GM13976 (cell line): ENCODE measurements at regions of chr3 and their contacts with region 1.

Region 1: DNA sequence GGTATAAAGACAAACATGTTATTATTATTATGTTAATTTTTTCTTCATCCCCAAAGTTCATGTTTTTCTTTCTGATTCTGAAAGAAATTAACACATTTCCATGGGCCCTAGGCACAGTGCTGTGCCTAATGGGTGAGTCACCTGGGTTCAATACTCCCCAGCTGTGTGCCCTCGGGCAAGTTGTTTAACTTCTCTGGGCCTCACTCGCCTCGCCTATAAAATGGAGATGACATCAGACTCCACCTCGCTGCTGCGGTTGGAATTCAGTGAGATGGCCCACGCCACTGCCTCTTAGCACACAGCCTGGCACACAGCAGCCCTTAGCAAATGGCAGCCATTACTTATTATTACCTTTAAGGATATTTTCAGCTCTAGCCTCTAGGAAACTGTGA is 22.6 kb downstream of the DNASE1L3 start:
- DNase-seq: no peak
- CTCF ChIP-seq: no peak

Region 2: DNA sequence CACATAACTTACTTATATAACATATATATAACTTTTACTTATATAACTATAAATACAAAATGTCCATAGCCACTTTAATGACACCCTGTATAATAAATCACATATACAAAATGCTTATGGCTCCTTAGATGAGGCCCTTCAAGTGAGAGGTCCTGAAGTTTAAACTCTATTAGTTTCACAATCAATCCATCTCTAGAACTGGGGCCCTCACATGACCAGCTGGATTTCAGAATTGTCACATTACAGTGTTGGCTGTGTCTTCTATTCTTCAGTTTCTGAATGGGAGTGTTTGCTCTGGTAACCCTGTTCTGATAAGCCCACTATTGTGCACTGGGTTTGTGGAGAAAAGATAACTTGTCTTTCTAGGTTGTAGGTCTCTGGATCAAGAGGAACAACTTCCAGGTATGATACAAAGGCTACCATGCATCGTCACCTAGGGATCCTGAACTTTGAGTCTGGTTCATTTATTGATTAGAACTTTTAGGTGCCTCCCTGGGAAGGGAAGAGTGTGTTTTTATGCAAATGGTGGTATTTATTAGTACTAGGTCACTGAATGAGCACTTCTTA is 751.9 kb before region 1 on chr3:
- in situ Hi-C with region 1: no loop called
- DNase-seq: no peak
- CTCF ChIP-seq: no peak

Region 3: GRCh38 chr3:58222094-58222724 is 34.0 kb after region 1 on chr3:
- in situ Hi-C with region 1: loop called (anchors 5 kb)
- DNase-seq: no peak
- CTCF ChIP-seq: no peak

Region 4: GRCh38 chr3:58299839-58300516 is 111.8 kb after region 1 on chr3:
- in situ Hi-C with region 1: loop called (anchors 5 kb)
- DNase-seq: no peak
- CTCF ChIP-seq: peak; percentile 41

Region 5: GRCh38 chr3:58532794-58533220 is 344.6 kb after region 1 on chr3:
- in situ Hi-C with region 1: loop called (anchors 10 kb)
- DNase-seq: peak; percentile 91
- CTCF ChIP-seq: peak; percentile 92